IMR-90 (cell line): ENCODE measurements at regions of chr22 and their contacts with region 1.

Region 1: GRCh38 chr22:27405672-27406388 is 395.7 kb downstream of the MN1 start:
- DNase-seq: peak; percentile 45
- ATAC-seq: peak; percentile 95
- H3K4me3 ChIP-seq: no peak overlapping the region
- H3K27ac ChIP-seq: no peak overlapping the region
- H3K4me1 ChIP-seq: no peaks in the 10 kb centered on the region
- H3K27me3 ChIP-seq: peaks cover 14% of the 10 kb centered on the region
- CTCF ChIP-seq: peak; percentile 79
- POLR2A ChIP-seq: peak; percentile 28; the same call in 1 of the 2 replicates
- RAD21 ChIP-seq: peak; percentile 93

Region 2: DNA sequence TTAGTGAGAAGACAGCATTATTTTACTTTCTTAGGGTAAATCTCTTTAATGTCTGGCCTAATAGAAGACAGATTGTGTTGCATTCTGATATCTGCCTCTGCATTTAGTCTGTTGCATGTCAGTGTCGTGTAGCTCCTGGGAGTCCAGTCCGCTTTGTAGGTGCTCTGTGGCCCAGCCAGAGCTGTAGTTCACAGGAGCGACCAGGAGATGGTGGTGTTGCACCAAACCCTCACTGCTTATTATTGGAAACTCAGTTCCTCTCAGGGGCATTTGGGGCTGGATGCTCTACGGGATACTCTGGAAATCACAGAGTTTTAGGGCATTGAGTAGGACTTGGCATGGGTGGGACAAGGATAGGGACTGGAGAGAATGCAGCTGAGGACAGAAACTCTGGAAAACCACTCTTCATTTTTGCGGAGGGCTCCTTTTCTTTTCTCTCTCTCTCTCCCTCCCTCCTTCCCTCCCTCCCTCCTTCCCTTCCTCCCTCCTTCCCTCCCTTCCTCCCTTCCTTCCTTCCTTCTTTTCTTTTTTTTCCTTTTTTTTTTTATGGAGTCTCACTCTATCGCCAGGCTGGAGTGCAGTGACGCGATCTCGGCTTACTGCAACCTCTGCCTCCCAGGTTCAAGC is 726.7 kb before region 1 on chr22:
- CTCF ChIA-PET with region 1: no interaction called
- POLR2A ChIA-PET with region 1: no interaction called
- dilution Hi-C with region 1: no loop called
- in situ Hi-C with region 1: no loop called
- intact Hi-C with region 1: loop called (anchors 5 kb)
- DNase-seq: peak; percentile 71
- ATAC-seq: peak; percentile 91
- H3K4me3 ChIP-seq: no peak overlapping the region
- H3K27ac ChIP-seq: no peak overlapping the region
- H3K4me1 ChIP-seq: peaks cover 14% of the 10 kb centered on the region
- H3K27me3 ChIP-seq: no peaks in the 10 kb centered on the region
- CTCF ChIP-seq: peak; percentile 93
- POLR2A ChIP-seq: no peak
- RAD21 ChIP-seq: peak; percentile 94

Region 3: GRCh38 chr22:27531782-27532530 is 126.1 kb after region 1 on chr22:
- CTCF ChIA-PET with region 1: no interaction called
- POLR2A ChIA-PET with region 1: no interaction called
- dilution Hi-C with region 1: no loop called
- in situ Hi-C with region 1: no loop called
- intact Hi-C with region 1: no loop called
- DNase-seq: peak; percentile 82
- ATAC-seq: peak; percentile 80
- H3K4me3 ChIP-seq: no peak overlapping the region
- H3K27ac ChIP-seq: no peak overlapping the region
- H3K4me1 ChIP-seq: peaks cover 6% of the 10 kb centered on the region
- H3K27me3 ChIP-seq: peaks cover 16% of the 10 kb centered on the region
- CTCF ChIP-seq: no peak
- POLR2A ChIP-seq: no peak
- RAD21 ChIP-seq: no peak